T-cell (primary cell): ENCODE measurements at regions of chr3 and their contacts with region 1.

Region 1: DNA sequence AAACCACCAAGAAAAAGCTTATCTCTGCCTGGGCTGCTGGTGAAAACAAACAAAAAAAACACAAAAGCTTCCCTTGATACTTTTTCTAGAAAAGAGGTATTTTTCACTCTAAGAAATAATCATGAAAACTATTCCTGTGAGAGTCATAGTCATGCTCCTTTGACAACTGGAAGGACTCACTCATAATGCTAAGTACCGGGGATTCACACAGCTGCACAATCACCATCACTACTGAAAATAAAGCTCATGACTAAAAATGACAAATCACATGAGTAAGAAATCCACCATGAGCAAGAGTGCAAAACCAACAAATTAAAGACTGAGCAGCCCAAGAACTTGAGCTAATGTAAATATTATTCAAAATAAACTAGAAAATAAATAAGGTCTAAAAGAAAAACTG is 10.6 kb upstream of the POU1F1 start:
- DNase-seq: no peak
- ATAC-seq: no peak
- H3K4me3 ChIP-seq: no peak overlapping the region
- H3K4me3 Mint-ChIP-seq: no peak overlapping the region
- H3K27ac ChIP-seq: no peak overlapping the region
- H3K27ac Mint-ChIP-seq: no peak overlapping the region
- H3K4me1 ChIP-seq: no peaks in the 10 kb centered on the region
- H3K4me1 Mint-ChIP-seq: no peaks in the 10 kb centered on the region
- H3K27me3 ChIP-seq: no peaks in the 10 kb centered on the region
- H3K27me3 Mint-ChIP-seq: peaks cover 3 to 5% of the 10 kb centered on the region in 2 donors

Region 2: DNA sequence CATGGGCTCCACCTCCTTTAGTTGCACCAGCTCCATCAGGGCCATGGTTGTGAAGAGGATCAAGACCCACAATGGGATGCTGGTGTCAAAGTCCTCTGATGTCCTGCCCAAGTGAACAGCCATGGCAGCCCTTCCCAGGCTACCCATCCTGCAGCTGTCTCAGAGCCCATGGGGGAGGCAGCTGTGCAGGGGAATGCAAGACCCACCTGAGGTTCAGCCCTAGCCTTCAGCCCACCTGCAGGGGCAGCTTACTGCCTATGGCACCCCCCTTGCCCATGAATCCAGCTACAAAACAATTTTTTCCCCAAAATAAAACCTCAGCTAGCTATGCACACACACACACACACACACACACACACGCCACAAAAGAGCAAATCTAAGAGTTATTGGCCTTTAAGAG is 37.6 kb after region 1 on chr3:
- CTCF ChIA-PET with region 1: no interaction called
- POLR2A ChIA-PET with region 1: no interaction called
- DNase-seq: no peak
- ATAC-seq: no peak
- H3K4me3 ChIP-seq: no peak overlapping the region
- H3K4me3 Mint-ChIP-seq: no peak overlapping the region
- H3K27ac ChIP-seq: no peak overlapping the region
- H3K27ac Mint-ChIP-seq: no peak overlapping the region
- H3K4me1 ChIP-seq: no peaks in the 10 kb centered on the region
- H3K4me1 Mint-ChIP-seq: no peaks in the 10 kb centered on the region
- H3K27me3 ChIP-seq: peaks cover 0 to 18% of the 10 kb centered on the region in 2 experiments
- H3K27me3 Mint-ChIP-seq: peaks cover 14% of the 10 kb centered on the region in 2 donors

Region 3: GRCh38 chr3:88167173-88167572 is 880.2 kb after region 1 on chr3:
- CTCF ChIA-PET with region 1: no interaction called
- POLR2A ChIA-PET with region 1: interaction called in 1 of 2 experiments, 11 read pairs
- DNase-seq: no peak
- ATAC-seq: no peak
- H3K4me3 ChIP-seq: no peak overlapping the region
- H3K4me3 Mint-ChIP-seq: no peak overlapping the region
- H3K27ac ChIP-seq: no peak overlapping the region
- H3K27ac Mint-ChIP-seq: no peak overlapping the region
- H3K4me1 ChIP-seq: no peaks in the 10 kb centered on the region
- H3K4me1 Mint-ChIP-seq: peaks cover 0 to 11% (median 11%) of the 10 kb centered on the region in 3 donors
- H3K27me3 ChIP-seq: no peaks in the 10 kb centered on the region
- H3K27me3 Mint-ChIP-seq: no peaks in the 10 kb centered on the region